ENCODE measurements at regions of chr12 and their contacts with region 1.

Region 1: GRCh38 chr12:32755654-32756475 is at the start of gene YARS2:
- DNase-seq: peak; percentile 88
- CTCF ChIP-seq: peak; percentile 78

Region 2: DNA sequence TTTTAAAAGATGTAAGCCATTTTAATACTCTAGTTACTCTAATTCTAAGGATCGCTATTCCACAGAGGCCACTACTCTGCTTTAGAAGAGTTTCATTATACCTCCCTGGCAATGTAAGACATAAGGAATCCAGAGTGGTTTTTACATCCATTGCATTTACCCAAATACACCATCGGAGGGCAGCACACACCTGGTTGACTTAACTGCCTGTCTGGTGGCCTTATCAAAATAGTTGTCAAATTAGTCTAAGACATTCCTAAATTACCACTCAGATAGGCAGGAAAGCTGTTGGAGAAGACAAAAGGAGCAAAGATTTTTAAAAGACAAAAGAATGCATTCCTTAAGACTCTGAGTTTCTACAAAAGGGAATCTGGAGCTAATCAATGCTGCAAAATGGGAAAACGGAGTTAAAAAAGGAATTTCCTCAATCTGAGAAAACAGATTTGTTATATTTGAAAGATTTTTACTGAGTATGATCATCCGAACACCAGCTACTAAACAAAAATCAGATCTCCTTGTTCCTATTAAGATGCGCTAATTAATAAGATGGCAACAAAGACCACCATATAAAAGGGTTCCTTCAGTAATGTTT is 390.3 kb before region 1 on chr12:
- CTCF ChIA-PET with region 1: interaction called, 41 read pairs
- POLR2A ChIA-PET with region 1: no interaction called
- DNase-seq: peak; percentile 64
- CTCF ChIP-seq: peak; percentile 74

Region 3: GRCh38 chr12:32680787-32681186 is 75.1 kb before region 1 on chr12:
- CTCF ChIA-PET with region 1: interaction called, 11 read pairs
- POLR2A ChIA-PET with region 1: interaction called, 3 read pairs
- DNase-seq: no peak
- CTCF ChIP-seq: no peak

Region 4: DNA sequence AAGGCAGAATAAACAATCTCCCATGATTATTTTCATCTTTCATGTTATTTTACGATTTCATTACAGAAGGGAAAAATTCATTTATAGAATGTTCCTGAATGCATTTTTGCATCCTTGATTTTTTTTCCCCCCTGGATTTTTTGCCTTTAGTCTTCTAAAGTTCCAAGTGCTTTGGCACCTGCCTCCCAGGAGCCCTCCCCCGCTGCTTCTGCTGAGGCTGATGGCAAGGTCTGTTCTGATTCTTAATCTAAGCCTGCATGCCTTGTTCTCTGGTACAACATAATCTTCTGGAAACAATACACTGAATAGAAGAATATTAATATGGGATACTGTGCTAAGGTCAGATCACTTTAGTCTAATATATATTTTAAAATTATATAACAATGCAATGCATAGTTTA is 18.1 kb before region 1 on chr12:
- CTCF ChIA-PET with region 1: interaction called, 23 read pairs
- POLR2A ChIA-PET with region 1: interaction called, 8 read pairs
- DNase-seq: no peak
- CTCF ChIP-seq: no peak

Region 5: DNA sequence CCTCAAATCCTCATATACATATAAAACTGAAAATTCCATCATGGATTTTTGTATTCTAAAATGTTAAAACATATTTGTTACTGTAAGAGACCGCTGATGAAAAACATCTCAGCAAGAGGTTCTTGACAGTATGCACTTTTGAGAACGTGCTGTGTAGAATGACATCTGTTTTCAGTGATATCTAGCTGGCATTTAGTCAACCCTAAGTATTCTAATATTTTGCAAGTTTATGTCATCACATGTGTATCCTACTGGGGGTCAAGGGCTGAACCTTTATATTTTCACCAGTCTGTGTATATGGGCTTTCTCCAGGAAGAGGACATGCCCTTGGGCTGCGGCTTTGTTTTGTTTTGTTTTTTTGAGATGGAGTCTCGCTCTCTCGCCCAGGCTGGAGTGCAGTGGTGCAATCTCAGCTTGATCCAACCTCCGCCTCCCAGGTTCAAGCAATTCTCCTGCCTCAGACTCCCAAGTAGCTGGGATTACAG is 21.9 kb after region 1 on chr12:
- CTCF ChIA-PET with region 1: interaction called, 21 read pairs
- POLR2A ChIA-PET with region 1: no interaction called
- DNase-seq: no peak
- CTCF ChIP-seq: no peak

Region 6: DNA sequence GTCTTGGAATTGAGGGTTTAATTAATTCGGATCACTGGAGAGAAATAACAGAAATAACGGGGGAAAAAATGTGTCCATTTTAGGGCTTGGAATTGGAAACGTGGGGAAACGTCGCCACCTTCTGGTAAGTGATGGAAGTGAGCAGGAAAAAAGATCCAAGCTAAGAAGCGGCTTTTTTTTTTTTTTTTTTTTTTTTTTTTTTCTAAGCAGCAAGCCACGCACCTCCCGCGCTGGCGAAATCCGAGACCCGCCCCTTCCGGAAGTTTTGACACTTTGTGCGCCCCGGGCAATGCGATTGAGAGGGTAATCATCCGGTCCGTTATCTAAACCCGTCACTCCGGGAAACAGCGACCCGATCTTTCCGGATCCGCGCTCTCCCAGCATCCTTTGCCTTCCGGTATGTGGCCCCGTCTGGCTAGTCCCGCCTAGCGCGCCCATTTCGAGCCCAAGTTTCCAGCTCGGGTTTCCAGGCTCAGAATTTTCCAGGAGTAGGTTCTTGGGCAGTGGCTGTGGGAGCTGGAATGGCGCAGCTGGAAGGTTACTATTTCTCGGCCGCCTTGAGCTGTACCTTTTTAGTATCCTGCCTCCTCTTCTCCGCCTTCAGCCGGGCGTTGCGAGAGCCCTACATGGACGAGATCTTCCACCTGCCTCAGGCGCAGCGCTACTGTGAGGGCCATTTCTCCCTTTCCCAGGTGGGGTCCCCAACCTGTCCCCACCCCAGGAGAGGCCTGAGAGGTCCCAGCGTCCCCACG is 1266.4 kb after region 1 on chr12 and contains the start of gene ALG10:
- CTCF ChIA-PET with region 1: interaction called, 71 read pairs
- POLR2A ChIA-PET with region 1: interaction called, 9 read pairs
- DNase-seq: peak; percentile 82
- CTCF ChIP-seq: peak; percentile 59

Measured in GM10248 (cell line).